A549 (cell line): ENCODE measurements at regions of chr1 and their contacts with region 1.

Region 1: DNA sequence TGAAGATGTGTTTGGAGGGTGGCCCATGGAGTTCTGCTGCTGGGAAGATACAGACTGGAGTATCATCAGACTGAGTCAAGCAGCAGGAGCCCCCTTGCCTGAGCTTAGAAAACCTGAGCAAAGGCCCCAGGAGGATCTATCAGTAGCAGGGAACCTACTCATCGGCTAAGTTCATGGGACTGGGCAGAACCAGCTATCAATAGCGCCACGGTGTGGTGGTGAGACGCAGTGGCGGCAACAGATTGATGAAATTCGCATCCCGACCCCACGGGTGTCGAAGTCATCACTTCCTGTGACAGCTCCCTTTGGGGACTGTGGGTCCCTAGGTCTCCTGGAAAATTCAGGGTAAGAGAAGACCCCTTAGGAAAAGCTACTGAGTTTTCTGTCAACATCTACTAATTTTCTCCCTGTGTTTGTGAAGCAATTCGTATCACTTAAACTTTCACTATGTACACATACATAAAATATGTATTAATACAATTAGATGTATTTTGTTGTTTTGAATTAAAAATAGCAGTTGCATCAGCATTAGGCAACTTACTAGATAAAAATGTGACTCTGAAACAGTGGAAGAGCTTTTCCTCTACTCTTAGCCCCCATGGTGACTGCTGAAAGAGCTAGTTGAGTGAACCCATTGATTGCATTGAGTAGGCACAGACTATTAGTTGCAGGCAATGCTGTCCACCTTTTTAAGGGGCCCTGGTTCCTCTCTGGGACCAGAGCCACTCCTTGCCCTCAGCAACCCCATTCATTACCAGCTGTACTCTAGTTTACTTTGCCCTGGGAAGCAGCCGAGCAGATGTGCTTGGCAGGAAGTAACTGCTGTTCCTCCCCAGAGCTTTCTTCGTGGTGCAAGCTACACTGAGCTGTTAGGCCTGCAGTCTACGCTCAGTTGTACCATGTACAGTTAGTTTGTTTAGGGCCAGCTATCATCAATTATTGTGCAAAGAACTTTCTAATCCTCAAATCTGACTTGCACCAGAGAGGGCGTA is 7.3 kb upstream of the CACNA1S start:
- DNase-seq: peak; percentile 62 to 71
- ATAC-seq: peak in 1 of 2 experiments; percentile 63; a peak in 3 of 6 replicates
- H3K4me3 ChIP-seq: no peak overlapping the region
- H3K27ac ChIP-seq: no peak overlapping the region
- H3K4me1 ChIP-seq: peaks cover 9% of the 10 kb centered on the region; the same call in 2 of the 3 replicates
- CTCF ChIP-seq: peak; percentile 65
- EP300 ChIP-seq: no peak
- POLR2A ChIP-seq: no peak
- RAD21 ChIP-seq: peak; percentile 45 to 57

Region 2: GRCh38 chr1:201023517-201023902 is 96.0 kb before region 1 on chr1 and contains the start of gene KIF21B:
- CTCF ChIA-PET with region 1: interaction called, 12 read pairs
- POLR2A ChIA-PET with region 1: no interaction called
- DNase-seq: peak; percentile 59 to 88
- ATAC-seq: peak; percentile 66 to 85
- H3K4me3 ChIP-seq: peak within 1 kb of the TSS; percentile 76
- H3K27ac ChIP-seq: peak within 1 kb of the TSS; percentile 64 to 96
- H3K4me1 ChIP-seq: peaks cover 64% of the 10 kb centered on the region
- CTCF ChIP-seq: no peak
- EP300 ChIP-seq: no peak
- POLR2A ChIP-seq: no peak
- RAD21 ChIP-seq: no peak
- polyA plus RNA-seq, gene KIF21B: 3.6 and 3.8 TPM in 2 replicates

Region 3: DNA sequence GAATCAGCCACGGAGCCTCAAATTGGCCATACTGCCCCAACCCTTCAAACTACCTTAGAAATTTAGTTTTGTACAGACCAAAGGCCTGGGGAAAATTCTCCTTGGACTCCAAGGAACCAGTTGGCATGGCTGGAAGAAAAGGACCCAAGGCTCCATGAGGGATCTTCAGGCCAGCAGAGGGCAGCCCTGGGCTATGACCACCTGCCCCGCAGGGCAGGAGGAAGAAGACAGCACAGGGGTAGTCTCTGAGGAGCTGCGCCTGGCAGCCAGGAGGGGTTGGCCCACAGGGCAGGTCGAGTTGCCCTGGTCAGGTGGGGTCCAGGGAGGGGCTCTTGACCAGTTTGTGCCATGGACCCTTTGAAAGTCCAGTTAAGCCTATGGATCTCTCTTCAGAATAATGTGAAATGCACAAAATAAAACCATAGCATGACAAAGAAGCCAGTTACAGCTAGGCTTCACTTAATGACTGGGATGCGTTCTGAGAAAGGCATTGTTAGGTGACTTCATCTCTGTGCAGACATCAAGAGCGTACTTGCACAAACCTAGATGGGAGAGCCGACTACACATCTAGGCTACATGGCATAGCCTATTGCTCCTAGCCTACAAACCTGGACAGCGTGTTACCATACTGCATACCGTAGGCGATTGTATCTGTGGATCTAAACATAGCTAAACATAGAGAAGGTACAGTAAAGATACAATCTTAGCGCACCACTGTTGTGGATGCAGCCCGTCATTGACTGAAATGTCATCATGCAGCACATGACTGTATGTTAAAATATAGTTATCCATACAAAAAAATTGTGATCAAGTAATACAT is 33.4 kb before region 1 on chr1:
- CTCF ChIA-PET with region 1: interaction called, 83 read pairs
- POLR2A ChIA-PET with region 1: interaction called, 4 read pairs
- DNase-seq: peak; percentile 61 to 93
- ATAC-seq: peak; percentile 97 to 99
- H3K4me3 ChIP-seq: no peak overlapping the region
- H3K27ac ChIP-seq: no peak overlapping the region
- H3K4me1 ChIP-seq: no peaks in the 10 kb centered on the region
- CTCF ChIP-seq: peak; percentile 82
- EP300 ChIP-seq: no peak
- POLR2A ChIP-seq: no peak
- RAD21 ChIP-seq: peak; percentile 75 to 80

Region 4: GRCh38 chr1:201108614-201109013 is 10.9 kb before region 1 on chr1:
- CTCF ChIA-PET with region 1: interaction called, 84 read pairs
- POLR2A ChIA-PET with region 1: no interaction called
- DNase-seq: no peak
- ATAC-seq: no peak
- H3K4me3 ChIP-seq: no peak overlapping the region
- H3K27ac ChIP-seq: no peak overlapping the region
- H3K4me1 ChIP-seq: peaks cover 1% of the 10 kb centered on the region; the same call in 1 of the 3 replicates
- CTCF ChIP-seq: no peak
- EP300 ChIP-seq: no peak
- POLR2A ChIP-seq: no peak
- RAD21 ChIP-seq: no peak

Region 5: GRCh38 chr1:201137579-201138310 is 18.2 kb after region 1 on chr1:
- CTCF ChIA-PET with region 1: interaction called, 22 read pairs
- POLR2A ChIA-PET with region 1: no interaction called
- DNase-seq: no peak
- ATAC-seq: peak; percentile 39 to 46; a peak in 5 of 6 replicates
- H3K4me3 ChIP-seq: no peak overlapping the region
- H3K27ac ChIP-seq: peak overlapping the region in 1 of 2 experiments; percentile 16; a peak in 1 of 6 replicates
- H3K4me1 ChIP-seq: peaks cover 13% of the 10 kb centered on the region; the same call in 1 of the 3 replicates
- CTCF ChIP-seq: no peak
- EP300 ChIP-seq: no peak
- POLR2A ChIP-seq: no peak
- RAD21 ChIP-seq: no peak